ENCODE measurements at regions of chr15 and their contacts with region 1.

Region 1: GRCh38 chr15:39782441-39783138 is at the start of gene FSIP1:
- DNase-seq: peak; percentile 76 to 99
- H3K4me3 ChIP-seq: peak within 1 kb of the TSS; percentile 73 to 97 (median 90)
- H3K27ac ChIP-seq: peak within 1 kb of the TSS; percentile 60
- H3K4me1 ChIP-seq: peaks cover 0 to 19% (median 13%) of the 10 kb centered on the region in 4 experiments; a peak in 5 of 7 replicates
- H3K27me3 ChIP-seq: no peaks in the 10 kb centered on the region
- CTCF ChIP-seq: no peak
- EP300 ChIP-seq: peak in 1 of 2 experiments; percentile 96; a peak in 2 of 3 replicates
- POLR2A ChIP-seq: peak in 1 of 2 experiments; percentile 80; a peak in 2 of 3 replicates
- RAD21 ChIP-seq: no peak
- total RNA-seq, gene FSIP1: 0.88 and 1.3 TPM in 2 replicates

Region 2: GRCh38 chr15:39747326-39747725 is 35.3 kb before region 1 on chr15:
- CTCF ChIA-PET with region 1: no interaction called
- POLR2A ChIA-PET with region 1: no interaction called
- DNase-seq: no peak
- H3K4me3 ChIP-seq: no peak overlapping the region
- H3K27ac ChIP-seq: no peak overlapping the region
- H3K4me1 ChIP-seq: no peaks in the 10 kb centered on the region
- H3K27me3 ChIP-seq: no peaks in the 10 kb centered on the region
- CTCF ChIP-seq: no peak
- EP300 ChIP-seq: no peak
- POLR2A ChIP-seq: no peak
- RAD21 ChIP-seq: no peak

Region 3: DNA sequence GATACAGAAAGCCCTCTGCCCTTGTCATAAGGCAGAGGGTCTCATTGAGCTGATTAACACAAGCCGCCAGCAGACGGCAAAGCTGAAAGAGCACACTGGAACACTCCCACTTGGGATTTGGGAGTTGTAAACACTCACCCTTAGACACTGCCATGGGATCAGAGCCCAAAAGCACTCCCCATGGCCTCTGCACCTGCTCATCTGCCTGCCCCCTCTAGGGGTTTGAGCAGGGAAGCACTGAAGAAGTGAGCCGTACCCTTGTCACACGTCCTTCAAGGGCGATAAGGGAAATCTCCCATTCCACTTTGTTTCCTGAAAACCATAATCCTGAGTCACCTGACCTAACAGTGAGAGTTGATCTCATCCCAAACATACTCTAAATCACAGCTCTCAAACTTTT is 14.7 kb before region 1 on chr15:
- CTCF ChIA-PET with region 1: interaction called, 14 read pairs
- POLR2A ChIA-PET with region 1: no interaction called
- DNase-seq: no peak
- H3K4me3 ChIP-seq: no peak overlapping the region
- H3K27ac ChIP-seq: no peak overlapping the region
- H3K4me1 ChIP-seq: no peaks in the 10 kb centered on the region
- H3K27me3 ChIP-seq: no peaks in the 10 kb centered on the region
- CTCF ChIP-seq: peak; percentile 35 to 47 (median 45)
- EP300 ChIP-seq: no peak
- POLR2A ChIP-seq: no peak
- RAD21 ChIP-seq: peak; percentile 25 to 46; a peak in 3 of 4 replicates

Region 4: GRCh38 chr15:39807791-39808190 is 25.2 kb after region 1 on chr15:
- CTCF ChIA-PET with region 1: no interaction called
- POLR2A ChIA-PET with region 1: no interaction called
- DNase-seq: no peak
- H3K4me3 ChIP-seq: peak overlapping the region in 1 of 4 experiments; percentile 37; a peak in 1 of 8 replicates
- H3K27ac ChIP-seq: no peak overlapping the region
- H3K4me1 ChIP-seq: peaks cover 0 to 23% (median 14%) of the 10 kb centered on the region in 4 experiments; a peak in 5 of 7 replicates
- H3K27me3 ChIP-seq: no peaks in the 10 kb centered on the region
- CTCF ChIP-seq: no peak
- EP300 ChIP-seq: no peak
- POLR2A ChIP-seq: no peak
- RAD21 ChIP-seq: no peak

Region 5: GRCh38 chr15:39874890-39875549 is 92.4 kb after region 1 on chr15:
- CTCF ChIA-PET with region 1: interaction called, 28 read pairs
- POLR2A ChIA-PET with region 1: interaction called, 4 read pairs
- DNase-seq: no peak
- H3K4me3 ChIP-seq: no peak overlapping the region
- H3K27ac ChIP-seq: no peak overlapping the region
- H3K4me1 ChIP-seq: peaks cover 0 to 9% (median 2%) of the 10 kb centered on the region in 4 experiments; a peak in 5 of 7 replicates
- H3K27me3 ChIP-seq: no peaks in the 10 kb centered on the region
- CTCF ChIP-seq: peak in 2 of 3 experiments; percentile 45 to 56; a peak in 2 of 4 replicates
- EP300 ChIP-seq: no peak
- POLR2A ChIP-seq: no peak
- RAD21 ChIP-seq: peak; percentile 61 to 70

Region 6: GRCh38 chr15:39920510-39921273 is 138.1 kb after region 1 on chr15:
- CTCF ChIA-PET with region 1: interaction called, 20 read pairs
- POLR2A ChIA-PET with region 1: interaction called, 6 read pairs
- DNase-seq: peak in 1 of 2 experiments; percentile 86
- H3K4me3 ChIP-seq: peak overlapping the region; percentile 91 to 95 (median 94)
- H3K27ac ChIP-seq: peak overlapping the region; percentile 69
- H3K4me1 ChIP-seq: peaks cover 5 to 15% (median 8%) of the 10 kb centered on the region in 4 experiments; a peak in 6 of 7 replicates
- H3K27me3 ChIP-seq: no peaks in the 10 kb centered on the region
- CTCF ChIP-seq: peak in 2 of 3 experiments; percentile 23 to 29; a peak in 3 of 4 replicates
- EP300 ChIP-seq: no peak
- POLR2A ChIP-seq: peak; percentile 61 to 64
- RAD21 ChIP-seq: no peak; a peak in 1 of 4 replicates